Common myeloid progenitor, CD34-positive (primary cell): ENCODE measurements at regions of chr11 and their contacts with region 1.

Region 1: DNA sequence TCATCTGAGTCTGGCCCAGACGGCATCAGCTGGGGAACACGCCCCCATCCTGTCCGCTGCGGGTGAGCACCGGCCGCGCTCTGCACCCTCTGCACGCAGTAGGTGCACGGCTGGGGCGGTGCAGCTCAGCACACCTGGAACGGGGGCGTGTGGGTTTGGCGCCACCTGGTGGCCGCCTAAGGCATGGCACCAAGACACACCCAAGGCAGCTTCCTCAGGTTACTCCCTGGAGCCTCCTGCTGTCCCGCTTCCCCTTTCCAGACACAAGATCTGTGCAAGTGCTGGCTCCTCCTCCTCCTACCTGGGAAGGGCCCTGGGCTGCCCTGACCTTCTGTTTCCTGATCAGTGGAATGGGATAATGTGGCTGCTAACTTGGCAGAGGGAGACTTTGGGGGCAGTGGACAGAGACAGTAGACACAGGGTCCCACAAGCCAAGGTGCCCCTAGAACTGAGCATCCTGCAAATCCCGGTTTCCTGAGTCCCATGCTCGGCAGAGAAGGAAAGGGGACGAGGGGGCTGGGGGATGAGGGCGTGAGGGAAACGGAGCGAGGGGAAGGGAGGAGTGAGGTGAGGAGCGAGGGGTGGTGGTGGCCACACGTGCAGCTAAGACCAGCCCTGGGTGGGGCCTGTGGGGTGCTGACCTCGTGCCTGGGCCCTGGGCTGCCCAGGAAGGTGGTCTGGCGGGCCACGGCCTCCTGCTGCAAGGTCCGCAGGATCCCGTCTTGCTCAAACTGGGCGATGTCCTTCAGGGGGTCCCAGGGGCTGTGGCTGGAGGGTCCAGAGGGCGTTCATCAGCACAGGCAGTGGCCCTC is 34.8 kb upstream of the CARS1 start:
- DNase-seq: peak; percentile 43 to 54 (median 45)
- H3K4me3 ChIP-seq: no peak overlapping the region
- H3K27ac ChIP-seq: no peak overlapping the region
- H3K4me1 ChIP-seq: peaks cover 0 to 15% (median 6%) of the 10 kb centered on the region in 4 experiments
- H3K27me3 ChIP-seq: no peaks in the 10 kb centered on the region

Region 2: DNA sequence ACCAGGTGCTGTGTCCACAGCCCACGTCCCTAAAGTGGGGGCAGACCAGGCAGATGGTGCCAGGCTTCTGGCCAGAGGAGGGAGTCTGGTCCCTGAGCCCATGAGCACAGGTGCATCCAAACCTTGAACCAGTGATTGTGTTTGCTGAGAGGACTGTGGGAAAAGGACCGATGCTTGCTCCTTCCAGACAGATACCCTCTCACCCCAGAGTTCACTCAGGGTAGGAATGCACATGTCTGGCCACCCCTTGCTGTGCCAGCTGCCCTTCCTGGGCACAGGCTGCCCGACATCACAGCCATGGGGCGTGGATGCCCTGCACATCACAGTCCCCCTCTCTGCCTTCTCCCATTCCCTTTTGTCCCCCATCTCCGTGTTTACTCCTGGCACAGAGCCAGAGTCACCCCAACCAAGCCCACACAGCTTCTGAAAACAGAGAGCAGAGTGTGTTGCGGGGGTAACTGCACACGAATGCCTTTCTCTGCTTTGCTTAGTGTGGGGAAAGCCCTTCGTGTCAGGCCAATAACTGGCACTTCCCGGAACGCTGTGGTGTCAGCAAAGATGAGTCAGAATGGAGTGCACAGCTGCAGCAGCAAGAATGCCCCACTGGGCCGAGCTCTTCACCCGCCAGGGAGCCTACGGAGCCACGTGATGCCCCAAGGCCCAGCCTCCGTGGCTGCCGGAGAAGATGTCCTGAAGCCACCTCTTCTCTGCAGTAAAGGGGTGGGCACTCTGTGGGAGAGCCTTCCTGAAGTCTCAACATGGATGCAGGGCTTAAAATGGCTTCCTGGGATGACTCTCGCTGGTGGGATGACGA is 42.4 kb before region 1 on chr11:
- CTCF ChIA-PET with region 1: interaction called, 44 read pairs
- POLR2A ChIA-PET with region 1: no interaction called
- DNase-seq: peak in 2 of 3 donors; percentile 27 to 38
- H3K4me3 ChIP-seq: no peak overlapping the region
- H3K27ac ChIP-seq: no peak overlapping the region
- H3K4me1 ChIP-seq: peaks cover 0 to 11% (median 5%) of the 10 kb centered on the region in 4 experiments
- H3K27me3 ChIP-seq: no peaks in the 10 kb centered on the region

Region 3: GRCh38 chr11:3146612-3147256 is 54.7 kb after region 1 on chr11:
- CTCF ChIA-PET with region 1: no interaction called
- POLR2A ChIA-PET with region 1: no interaction called
- DNase-seq: no peak
- H3K4me3 ChIP-seq: no peak overlapping the region
- H3K27ac ChIP-seq: no peak overlapping the region
- H3K4me1 ChIP-seq: peaks cover 0 to 8% (median 6%) of the 10 kb centered on the region in 4 experiments
- H3K27me3 ChIP-seq: no peaks in the 10 kb centered on the region